Activated T-helper 2 cell treated with anti-CD3 and anti-CD28 coated beads, Interferon-gamma antibody, Interleukin-2, Interleukin-4, amounts not matched to agents 10 μg/mL and 5 μg/mL and 100 μg/mL, durations not matched to agents 14 hours and 24 hours and 36 hours (primary cell): ENCODE measurements at regions of chr21 and their contacts with region 1.

Region 1: GRCh38 chr21:33434770-33435360 is 31.7 kb downstream of the IFNGR2 start:
- DNase-seq: peak; percentile 16
- H3K4me3 Mint-ChIP-seq: peak overlapping the region; percentile 27
- H3K27ac Mint-ChIP-seq: peak overlapping the region; percentile 82
- H3K4me1 Mint-ChIP-seq: peaks cover 29% of the 10 kb centered on the region
- H3K27me3 Mint-ChIP-seq: no peaks in the 10 kb centered on the region

Region 2: DNA sequence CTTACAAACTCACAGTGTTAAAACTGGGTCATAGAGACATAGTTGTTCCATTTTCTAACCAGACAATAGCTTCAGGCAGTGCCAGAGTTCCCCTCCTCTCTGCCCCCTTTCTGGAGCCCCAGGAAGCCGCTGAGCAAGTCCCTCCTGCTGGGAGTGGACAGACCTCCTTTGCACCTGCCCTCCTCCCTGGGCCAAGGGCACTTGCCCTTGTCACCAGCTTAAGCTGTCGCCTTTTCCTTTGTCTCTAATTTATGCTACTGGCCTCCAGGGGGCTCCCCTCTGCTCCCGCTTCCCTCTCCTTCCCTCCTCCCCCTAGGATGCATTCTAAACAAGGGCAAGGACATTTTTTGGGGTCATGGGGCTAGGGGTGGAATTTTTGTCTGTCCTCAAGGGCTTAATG is 1338.5 kb before region 1 on chr21:
- intact Hi-C with region 1: no loop called
- DNase-seq: no peak
- H3K4me3 Mint-ChIP-seq: no peak overlapping the region
- H3K27ac Mint-ChIP-seq: no peak overlapping the region
- H3K4me1 Mint-ChIP-seq: no peaks in the 10 kb centered on the region
- H3K27me3 Mint-ChIP-seq: peaks cover 5% of the 10 kb centered on the region

Region 3: DNA sequence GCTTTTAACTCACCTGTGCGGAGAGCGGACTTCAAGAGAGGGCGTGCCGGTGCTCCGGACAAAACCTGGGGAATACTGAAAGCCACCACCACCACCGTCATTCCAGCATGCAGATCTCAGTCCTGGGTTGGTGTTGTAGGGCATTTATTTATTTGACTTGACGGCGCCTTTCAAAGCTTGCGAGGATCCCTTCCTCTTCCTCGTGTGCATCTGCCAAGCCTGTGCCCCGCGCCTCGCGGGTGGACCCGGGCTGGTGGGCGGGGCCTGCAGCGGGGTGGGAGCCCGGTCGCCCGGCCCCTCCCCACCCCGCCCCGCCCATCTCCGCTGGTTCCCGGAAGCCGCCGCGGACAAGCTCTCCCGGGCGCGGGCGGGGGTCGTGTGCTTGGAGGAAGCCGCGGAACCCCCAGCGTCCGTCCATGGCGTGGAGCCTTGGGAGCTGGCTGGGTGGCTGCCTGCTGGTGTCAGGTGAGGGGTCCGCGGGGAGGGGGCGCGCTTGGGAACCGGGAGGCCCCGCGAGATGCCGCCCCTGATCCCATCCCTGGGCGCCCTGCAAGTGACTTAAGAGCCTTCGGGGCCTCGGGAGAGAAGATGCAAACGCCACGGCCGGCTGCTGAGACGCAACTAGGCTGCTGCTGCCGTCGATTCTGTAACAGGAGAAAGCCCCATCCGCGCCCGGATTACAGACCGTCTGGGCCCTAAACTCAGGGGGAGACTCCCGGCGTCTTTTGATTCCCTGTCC is 168.6 kb before region 1 on chr21 and contains the start of gene IL10RB:
- intact Hi-C with region 1: loop called (anchors 2 kb)
- DNase-seq: peak; percentile 62
- H3K4me3 Mint-ChIP-seq: peak within 1 kb of the TSS; percentile 98
- H3K27ac Mint-ChIP-seq: peak within 1 kb of the TSS; percentile 89
- H3K4me1 Mint-ChIP-seq: peaks cover 32% of the 10 kb centered on the region
- H3K27me3 Mint-ChIP-seq: no peaks in the 10 kb centered on the region
- total RNA-seq, gene IL10RB: 23.4 and 24.7 TPM in 2 replicates

Region 4: DNA sequence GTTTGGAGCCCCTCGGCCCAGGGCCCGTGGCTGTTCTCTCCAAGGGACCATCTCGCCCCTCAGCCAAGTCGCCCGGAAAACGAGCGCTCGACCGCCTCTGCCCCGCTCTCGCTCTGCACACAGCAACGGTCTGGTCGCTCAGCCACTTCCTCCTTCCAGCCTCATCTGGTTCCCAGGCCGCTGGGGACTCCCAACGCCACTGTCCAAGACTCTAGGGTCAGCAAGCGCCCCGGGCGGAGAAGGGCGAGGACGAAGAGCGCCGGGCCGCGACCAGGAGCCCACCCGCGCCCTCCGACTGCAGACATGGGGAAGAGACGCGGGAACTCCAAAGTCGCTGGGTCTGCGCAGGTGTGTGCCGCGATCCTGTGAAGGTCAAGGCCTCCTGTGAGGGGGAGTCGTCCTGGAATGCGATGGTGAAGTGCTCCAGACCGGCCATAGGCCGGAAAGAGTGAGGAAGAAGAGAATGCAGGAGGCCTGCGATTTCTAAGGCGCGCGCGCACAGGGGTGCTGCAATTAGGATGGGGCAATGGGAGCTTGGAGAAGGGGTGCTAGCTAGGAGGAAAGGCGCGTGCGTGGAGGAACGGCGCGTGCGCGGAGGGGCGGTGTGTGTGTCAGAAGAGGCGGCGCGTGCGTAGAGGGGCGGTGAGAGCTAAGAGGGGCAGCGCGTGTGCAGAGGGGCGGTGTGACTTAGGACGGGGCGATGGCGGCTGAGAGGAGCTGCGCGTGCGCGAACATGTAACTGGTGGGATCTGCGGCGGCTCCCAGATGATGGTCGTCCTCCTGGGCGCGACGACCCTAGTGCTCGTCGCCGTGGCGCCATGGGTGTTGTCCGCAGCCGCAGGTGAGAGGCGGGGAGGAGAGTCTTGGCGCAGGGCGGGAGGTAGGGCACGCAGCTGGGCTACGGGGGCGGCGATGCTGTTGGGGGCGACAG is 110.3 kb before region 1 on chr21 and contains the start of gene IFNAR1:
- intact Hi-C with region 1: loop called (anchors 2 kb)
- DNase-seq: peak; percentile 98
- H3K4me3 Mint-ChIP-seq: no peak within 1 kb of the TSS
- H3K27ac Mint-ChIP-seq: no peak within 1 kb of the TSS
- H3K4me1 Mint-ChIP-seq: peaks cover 20% of the 10 kb centered on the region
- H3K27me3 Mint-ChIP-seq: peaks cover 7% of the 10 kb centered on the region
- total RNA-seq, gene IFNAR1: 26.8 and 27.9 TPM in 2 replicates

Region 5: DNA sequence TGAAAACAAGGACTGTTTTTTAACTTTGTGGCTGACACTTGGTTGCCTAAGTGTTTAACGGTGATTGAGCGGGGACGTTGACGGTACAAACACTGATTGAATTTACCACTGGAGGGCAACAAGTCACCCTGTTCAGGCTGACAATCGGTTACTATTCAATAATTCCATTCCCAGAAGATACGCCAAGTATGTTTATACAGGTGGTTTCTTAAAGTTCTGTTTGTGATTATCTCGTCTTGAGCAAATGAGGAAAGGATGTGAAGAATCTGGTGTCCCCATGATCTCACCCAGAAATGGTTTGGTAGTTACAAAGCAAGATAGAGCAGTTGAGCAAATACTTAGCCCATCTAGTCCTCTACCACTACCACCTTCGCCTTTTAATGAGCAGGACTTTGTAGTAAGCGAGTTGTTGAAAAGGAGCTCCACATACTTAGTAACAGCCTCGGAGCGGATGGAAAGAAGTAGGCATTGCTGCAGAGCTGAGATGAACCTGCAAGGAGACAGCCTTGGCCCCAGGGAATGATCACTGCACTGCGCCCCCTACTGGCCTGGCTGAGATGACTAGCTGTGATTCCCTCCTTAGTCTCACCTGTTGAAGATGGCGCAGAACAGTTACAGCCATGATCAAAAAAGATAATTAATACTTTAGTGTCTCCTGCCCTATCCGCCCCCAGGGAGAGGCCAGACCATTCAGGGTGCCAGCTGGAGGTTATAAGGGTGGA is 73.8 kb before region 1 on chr21:
- intact Hi-C with region 1: loop called (anchors 2 kb)
- DNase-seq: peak; percentile 73
- H3K4me3 Mint-ChIP-seq: peak overlapping the region; percentile 67
- H3K27ac Mint-ChIP-seq: peak overlapping the region; percentile 66
- H3K4me1 Mint-ChIP-seq: peaks cover 18% of the 10 kb centered on the region
- H3K27me3 Mint-ChIP-seq: no peaks in the 10 kb centered on the region

Region 6: GRCh38 chr21:33406493-33406892 is 28.4 kb before region 1 on chr21:
- intact Hi-C with region 1: loop called (anchors 1 kb)
- DNase-seq: no peak
- H3K4me3 Mint-ChIP-seq: peak overlapping the region; percentile 17
- H3K27ac Mint-ChIP-seq: no peak overlapping the region
- H3K4me1 Mint-ChIP-seq: peaks cover 30% of the 10 kb centered on the region
- H3K27me3 Mint-ChIP-seq: peaks cover 6% of the 10 kb centered on the region

Region 7: GRCh38 chr21:33651965-33652680 is 217.3 kb after region 1 on chr21:
- intact Hi-C with region 1: no loop called
- DNase-seq: no peak
- H3K4me3 Mint-ChIP-seq: no peak overlapping the region
- H3K27ac Mint-ChIP-seq: no peak overlapping the region
- H3K4me1 Mint-ChIP-seq: no peaks in the 10 kb centered on the region
- H3K27me3 Mint-ChIP-seq: peaks cover 13% of the 10 kb centered on the region